Posterior vena cava (tissue), 2 donors: ENCODE measurements at regions of chr9 and their contacts with region 1.

Region 1: DNA sequence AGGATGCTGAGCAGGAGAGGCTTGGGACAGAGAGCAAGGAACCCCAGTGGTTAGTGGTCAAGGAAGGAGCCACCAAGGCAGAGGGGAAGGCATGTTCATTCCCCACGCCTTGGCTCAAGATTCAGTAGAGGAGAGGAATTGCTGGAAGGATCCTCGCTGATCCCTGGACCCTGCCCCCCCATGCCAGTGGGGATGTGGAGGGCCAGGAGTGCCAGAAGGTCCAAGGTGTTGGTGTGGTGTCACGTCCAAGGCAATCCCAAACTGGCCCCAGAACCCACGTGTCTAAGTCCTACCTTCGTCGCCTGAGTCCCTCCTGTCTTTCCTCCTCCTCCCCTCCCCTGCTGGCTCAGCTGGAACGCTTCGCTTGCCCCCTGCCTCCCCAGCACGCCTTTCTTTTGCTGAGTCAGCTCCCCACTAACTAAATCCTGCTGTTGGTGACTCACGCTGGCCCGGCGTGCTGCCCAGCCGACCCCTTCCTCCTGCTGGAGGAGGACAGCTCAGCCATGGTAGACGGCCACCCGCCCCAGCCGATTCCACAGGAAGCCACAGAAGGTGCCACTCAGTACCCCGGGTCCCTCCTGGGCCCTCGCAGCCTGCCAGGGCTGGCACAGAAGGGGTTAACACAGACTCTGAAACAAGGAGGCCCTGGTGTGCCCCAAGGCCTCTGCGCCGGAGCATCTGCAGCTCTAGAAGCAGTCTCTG is 37.6 kb upstream of the ORM1 start:
- DNase-seq: peak; percentile 86

Region 2: GRCh38 chr9:114082017-114082762 is 203.1 kb before region 1 on chr9:
- intact Hi-C with region 1: loop called in 1 of 2 experiments (anchors 5 kb)
- DNase-seq: peak; percentile 93

Region 3: GRCh38 chr9:114163517-114163951 is 121.8 kb before region 1 on chr9:
- intact Hi-C with region 1: loop called (anchors 5 kb)
- DNase-seq: no peak